ENCODE measurements at regions of chr20 and their contacts with region 1.

Region 1: DNA sequence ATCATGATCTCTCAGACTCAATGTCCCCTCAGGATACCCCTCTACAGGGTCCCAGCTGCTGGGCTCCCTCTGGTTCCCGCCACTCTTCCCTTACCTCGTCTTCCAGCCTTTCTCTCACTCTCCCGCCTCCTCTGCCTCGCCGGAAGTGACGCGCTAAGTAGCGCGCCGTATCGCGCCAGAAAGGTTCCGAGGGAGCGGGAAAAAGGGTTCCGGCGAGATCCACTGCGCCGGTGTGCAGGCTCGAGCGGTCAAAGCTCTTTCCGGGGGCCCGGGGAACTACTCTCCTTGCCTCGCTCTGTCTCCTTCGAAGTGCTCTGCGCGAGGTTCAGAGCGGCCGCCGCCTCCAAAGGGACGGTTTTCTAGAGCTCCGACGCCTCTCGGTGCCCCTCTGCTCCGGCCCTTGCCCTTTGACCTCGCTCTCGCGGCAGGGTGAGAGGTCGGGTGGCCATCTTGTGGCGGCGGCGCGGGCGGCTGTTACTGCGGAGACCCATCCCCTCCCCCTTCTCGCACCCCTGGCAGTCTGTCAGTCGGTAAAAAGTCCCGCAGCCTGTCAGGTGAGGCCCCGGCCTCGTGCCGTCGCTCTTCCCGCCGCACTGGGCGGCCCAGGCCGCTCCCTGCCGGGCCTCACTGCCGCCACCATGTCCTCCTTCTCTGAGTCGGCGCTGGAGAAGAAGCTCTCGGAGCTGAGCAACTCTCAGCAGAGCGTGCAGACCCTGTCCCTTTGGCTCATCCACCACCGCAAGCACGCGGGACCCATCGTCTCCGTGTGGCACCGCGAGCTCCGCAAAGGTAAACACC is at the starts of genes RPRD1B and TTI1:
- DNase-seq: peak; percentile 92
- ATAC-seq: peak; percentile 89
- H3K4me3 Mint-ChIP-seq: peak within 1 kb of the TSS; percentile 93
- H3K27ac Mint-ChIP-seq: peak within 1 kb of the TSS; percentile 99
- H3K4me1 Mint-ChIP-seq: peaks cover 64% of the 10 kb centered on the region
- H3K27me3 Mint-ChIP-seq: no peaks in the 10 kb centered on the region
- total RNA-seq, gene RPRD1B: 32.4 to 34.3 TPM
- total RNA-seq, gene TTI1: 29.3 to 32.2 TPM

Region 2: GRCh38 chr20:38043512-38044300 is 10.2 kb after region 1 on chr20:
- CTCF ChIA-PET with region 1: interaction called, 3 read pairs
- POLR2A ChIA-PET with region 1: interaction called, 10 read pairs
- DNase-seq: no peak
- ATAC-seq: no peak
- H3K4me3 Mint-ChIP-seq: no peak overlapping the region
- H3K27ac Mint-ChIP-seq: no peak overlapping the region
- H3K4me1 Mint-ChIP-seq: peaks cover 16% of the 10 kb centered on the region
- H3K27me3 Mint-ChIP-seq: no peaks in the 10 kb centered on the region